ENCODE measurements at regions of chr4 and their contacts with region 1.

Region 1: GRCh38 chr4:173169428-173170181 is 994 bp downstream of the GALNT7 start:
- DNase-seq: peak; percentile 49
- H3K4me3 Mint-ChIP-seq: peak overlapping the region; percentile 61
- H3K27ac Mint-ChIP-seq: no peak overlapping the region
- H3K4me1 Mint-ChIP-seq: peaks cover 24% of the 10 kb centered on the region
- H3K27me3 Mint-ChIP-seq: no peaks in the 10 kb centered on the region
- CTCF ChIP-seq: no peak

Region 2: DNA sequence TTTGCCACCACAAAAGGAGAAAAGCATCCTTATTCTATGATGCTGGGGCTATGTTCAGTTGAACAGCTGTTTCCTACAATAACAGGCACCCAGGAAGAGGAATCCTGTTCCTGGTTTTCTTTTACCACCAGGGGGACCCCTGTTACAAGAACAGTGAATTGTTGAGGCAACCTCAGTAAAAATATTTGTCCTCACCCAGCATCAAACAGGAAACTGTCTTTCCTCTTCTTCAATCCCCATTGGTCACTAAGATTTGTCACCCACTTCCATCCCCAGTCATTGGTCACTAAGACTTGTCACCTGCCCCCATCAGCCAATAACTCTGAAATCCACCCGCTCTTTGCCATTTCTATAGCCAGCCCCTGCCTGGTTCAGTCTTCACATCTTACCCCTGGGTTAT is 144.5 kb before region 1 on chr4:
- CTCF ChIA-PET with region 1: interaction called, 4 read pairs
- intact Hi-C with region 1: loop called (anchors 5 kb)
- DNase-seq: peak; percentile 72
- H3K4me3 Mint-ChIP-seq: no peak overlapping the region
- H3K27ac Mint-ChIP-seq: no peak overlapping the region
- H3K4me1 Mint-ChIP-seq: peaks cover 21% of the 10 kb centered on the region
- H3K27me3 Mint-ChIP-seq: peaks cover 10% of the 10 kb centered on the region
- CTCF ChIP-seq: peak; percentile 60

Region 3: DNA sequence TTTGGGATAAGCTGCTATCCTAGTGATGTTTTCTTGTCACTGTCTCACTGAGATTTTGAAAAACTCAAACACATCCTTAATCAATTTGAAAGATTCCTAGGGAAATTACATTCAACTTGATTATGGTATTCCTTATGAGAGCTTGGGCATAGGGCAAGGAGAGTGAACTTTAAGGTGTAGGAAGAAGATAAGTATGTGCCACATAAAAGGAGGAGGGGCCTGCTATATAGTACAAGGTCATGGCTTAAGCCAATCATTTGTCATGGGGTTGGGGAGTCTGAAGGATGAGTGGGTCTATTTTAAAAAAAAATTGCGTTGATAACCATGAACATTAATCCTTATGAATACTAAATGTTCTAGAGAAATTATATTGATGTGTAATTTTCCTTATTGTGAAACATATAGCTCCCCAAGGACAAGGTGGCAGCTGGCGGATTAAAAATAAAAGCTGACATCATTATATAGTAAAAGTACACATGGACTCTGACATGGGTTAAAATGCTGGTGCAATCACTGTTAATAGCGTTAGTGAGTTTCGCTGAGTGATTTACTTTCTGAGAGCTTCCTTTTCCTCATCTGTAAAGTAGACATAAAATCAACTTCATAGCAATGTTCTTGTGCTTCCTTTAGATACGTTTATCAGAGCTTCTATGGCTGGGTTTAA is 16.4 kb after region 1 on chr4:
- CTCF ChIA-PET with region 1: interaction called, 3 read pairs
- intact Hi-C with region 1: loop called (anchors 2 kb)
- DNase-seq: no peak
- H3K4me3 Mint-ChIP-seq: peak overlapping the region; percentile 18
- H3K27ac Mint-ChIP-seq: peak overlapping the region; percentile 77
- H3K4me1 Mint-ChIP-seq: peaks cover 61% of the 10 kb centered on the region
- H3K27me3 Mint-ChIP-seq: no peaks in the 10 kb centered on the region
- CTCF ChIP-seq: no peak

Region 4: DNA sequence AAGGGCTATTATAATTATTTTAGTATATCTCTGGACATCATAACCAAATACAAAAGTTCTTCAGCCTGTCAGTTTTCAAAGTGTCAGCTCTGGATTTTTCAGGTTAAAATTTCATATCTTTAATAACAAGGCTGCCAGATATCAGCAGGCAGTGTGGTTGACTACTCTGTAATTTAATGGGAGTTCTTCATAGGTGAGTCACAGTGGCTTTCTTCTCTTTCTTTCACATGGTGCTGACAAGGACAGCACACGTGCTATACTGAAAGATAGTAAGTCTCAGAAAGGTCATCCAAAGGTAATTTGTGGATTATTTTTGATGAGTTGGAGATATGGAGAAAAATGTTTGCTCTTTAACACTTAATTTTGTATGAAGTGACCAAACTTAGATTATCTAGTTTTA is 42.2 kb after region 1 on chr4:
- CTCF ChIA-PET with region 1: interaction called, 3 read pairs
- intact Hi-C with region 1: loop called (anchors 5 kb)
- DNase-seq: no peak
- H3K4me3 Mint-ChIP-seq: no peak overlapping the region
- H3K27ac Mint-ChIP-seq: peak overlapping the region; percentile 87
- H3K4me1 Mint-ChIP-seq: peaks cover 20% of the 10 kb centered on the region
- H3K27me3 Mint-ChIP-seq: no peaks in the 10 kb centered on the region
- CTCF ChIP-seq: no peak

Region 5: GRCh38 chr4:173231916-173232315 is 62.3 kb after region 1 on chr4:
- CTCF ChIA-PET with region 1: interaction called, 3 read pairs
- intact Hi-C with region 1: loop called (anchors 5 kb)
- DNase-seq: no peak
- H3K4me3 Mint-ChIP-seq: no peak overlapping the region
- H3K27ac Mint-ChIP-seq: no peak overlapping the region
- H3K4me1 Mint-ChIP-seq: peaks cover 8% of the 10 kb centered on the region
- H3K27me3 Mint-ChIP-seq: no peaks in the 10 kb centered on the region
- CTCF ChIP-seq: no peak

Region 6: DNA sequence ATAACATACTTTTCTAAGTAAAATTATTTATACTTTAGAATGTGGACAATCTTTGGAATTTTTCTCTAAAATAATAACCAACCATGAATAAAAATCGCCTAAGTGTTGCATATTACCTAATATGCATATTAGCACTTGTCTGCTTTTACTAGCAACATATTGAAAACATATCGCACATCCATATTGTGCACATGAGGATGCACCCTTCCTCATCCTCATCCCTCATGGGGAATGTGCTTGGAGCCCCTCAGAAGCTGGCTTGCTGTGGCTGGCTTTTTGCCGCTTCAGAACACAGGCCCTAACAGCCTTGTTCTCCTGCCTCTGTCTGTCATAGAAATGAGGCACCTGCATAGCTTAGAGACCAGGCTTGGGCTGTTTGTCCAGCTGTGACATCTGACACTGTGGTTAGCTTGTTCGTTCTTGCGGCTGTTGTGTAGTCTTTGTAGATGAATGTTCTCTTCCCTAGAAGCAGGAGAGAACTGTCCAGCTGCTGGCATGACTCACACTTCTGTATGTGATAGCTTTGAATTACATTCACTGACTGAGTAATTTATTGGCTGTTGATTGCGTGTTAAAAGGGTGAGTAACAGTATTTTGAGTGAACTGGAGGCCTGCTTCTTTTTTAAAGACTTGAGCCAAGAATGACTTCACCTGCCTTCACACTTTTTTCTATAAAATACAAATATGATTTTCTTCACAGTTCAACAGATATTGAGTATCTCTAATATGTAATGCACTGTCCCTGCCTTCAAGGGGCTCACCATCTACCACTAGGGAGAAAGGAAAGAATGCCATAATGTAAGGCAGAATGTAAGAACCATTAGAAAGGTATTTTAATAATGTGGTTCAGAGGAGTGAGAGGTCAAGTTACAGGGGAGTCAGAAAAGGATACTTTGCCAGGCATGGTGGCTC is 82.7 kb after region 1 on chr4:
- CTCF ChIA-PET with region 1: interaction called, 3 read pairs
- intact Hi-C with region 1: loop called (anchors 5 kb)
- DNase-seq: peak; percentile 76
- H3K4me3 Mint-ChIP-seq: no peak overlapping the region
- H3K27ac Mint-ChIP-seq: peak overlapping the region; percentile 40
- H3K4me1 Mint-ChIP-seq: peaks cover 27% of the 10 kb centered on the region
- H3K27me3 Mint-ChIP-seq: no peaks in the 10 kb centered on the region
- CTCF ChIP-seq: no peak

Measured in Calu3 (cell line).